Natural killer cell (primary cell): ENCODE measurements at regions of chr19 and their contacts with region 1.

Region 1: GRCh38 chr19:35931161-35931873 is 4.9 kb upstream of the LRFN3 start:
- DNase-seq: peak; percentile 97 to 100
- ATAC-seq: peak; percentile 89 to 98 (median 91)
- H3K4me3 ChIP-seq: peak overlapping the region; percentile 26
- H3K4me3 Mint-ChIP-seq: peak overlapping the region; percentile 83
- H3K27ac ChIP-seq: peak overlapping the region; percentile 86
- H3K27ac Mint-ChIP-seq: peak overlapping the region; percentile 79 to 91
- H3K4me1 ChIP-seq: peaks cover 56% of the 10 kb centered on the region
- H3K4me1 Mint-ChIP-seq: peaks cover 24 to 54% of the 10 kb centered on the region in 2 donors
- H3K27me3 ChIP-seq: peaks cover 6% of the 10 kb centered on the region
- H3K27me3 Mint-ChIP-seq: peaks cover 0 to 4% of the 10 kb centered on the region in 2 donors
- CTCF ChIP-seq: peak; percentile 83

Region 2: DNA sequence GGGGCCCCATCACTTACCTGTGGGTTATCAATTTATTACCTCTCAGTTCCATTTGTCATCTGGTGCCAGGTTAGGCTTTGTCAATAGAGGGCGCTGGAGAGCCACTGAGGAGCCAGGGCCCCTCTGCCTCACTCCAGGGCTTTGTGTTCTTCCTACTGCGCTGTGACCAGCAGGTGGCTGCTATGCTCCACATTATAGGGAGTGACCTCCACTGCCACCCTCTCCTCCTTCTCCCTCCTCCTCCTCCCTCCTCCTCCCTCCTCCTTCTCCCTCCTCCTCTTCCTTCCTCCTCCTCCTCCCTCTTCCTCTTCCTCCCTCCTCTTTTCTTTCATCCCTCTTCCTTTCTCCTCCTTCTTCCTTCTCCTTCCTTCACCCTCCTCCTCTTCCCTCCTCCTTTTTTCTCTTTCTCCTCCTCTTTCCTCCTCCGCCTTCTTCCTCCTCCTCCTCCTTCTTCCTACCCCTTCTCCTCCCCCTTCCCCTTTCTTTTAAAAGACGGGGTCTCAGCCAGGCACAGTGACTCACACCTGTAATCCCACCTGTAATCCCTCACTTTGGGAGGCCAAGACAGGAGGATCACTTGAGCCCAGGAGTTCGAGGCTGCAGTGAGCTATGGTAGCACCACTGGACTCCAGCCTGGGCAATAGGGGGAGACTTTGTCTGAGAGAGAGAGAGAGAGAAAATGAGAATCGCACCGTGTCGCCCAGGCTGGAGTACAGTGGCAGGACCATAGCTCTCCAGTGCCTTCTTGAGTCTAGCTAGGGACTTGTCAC is 237.3 kb before region 1 on chr19:
- intact Hi-C with region 1: loop called (anchors 1 kb)
- DNase-seq: peak; percentile 78 to 96
- ATAC-seq: peak; percentile 100
- H3K4me3 ChIP-seq: no peak overlapping the region
- H3K4me3 Mint-ChIP-seq: no peak overlapping the region
- H3K27ac ChIP-seq: no peak overlapping the region
- H3K27ac Mint-ChIP-seq: no peak overlapping the region
- H3K4me1 ChIP-seq: no peaks in the 10 kb centered on the region
- H3K4me1 Mint-ChIP-seq: no peaks in the 10 kb centered on the region
- H3K27me3 ChIP-seq: no peaks in the 10 kb centered on the region
- H3K27me3 Mint-ChIP-seq: no peaks in the 10 kb centered on the region
- CTCF ChIP-seq: peak; percentile 97

Region 3: DNA sequence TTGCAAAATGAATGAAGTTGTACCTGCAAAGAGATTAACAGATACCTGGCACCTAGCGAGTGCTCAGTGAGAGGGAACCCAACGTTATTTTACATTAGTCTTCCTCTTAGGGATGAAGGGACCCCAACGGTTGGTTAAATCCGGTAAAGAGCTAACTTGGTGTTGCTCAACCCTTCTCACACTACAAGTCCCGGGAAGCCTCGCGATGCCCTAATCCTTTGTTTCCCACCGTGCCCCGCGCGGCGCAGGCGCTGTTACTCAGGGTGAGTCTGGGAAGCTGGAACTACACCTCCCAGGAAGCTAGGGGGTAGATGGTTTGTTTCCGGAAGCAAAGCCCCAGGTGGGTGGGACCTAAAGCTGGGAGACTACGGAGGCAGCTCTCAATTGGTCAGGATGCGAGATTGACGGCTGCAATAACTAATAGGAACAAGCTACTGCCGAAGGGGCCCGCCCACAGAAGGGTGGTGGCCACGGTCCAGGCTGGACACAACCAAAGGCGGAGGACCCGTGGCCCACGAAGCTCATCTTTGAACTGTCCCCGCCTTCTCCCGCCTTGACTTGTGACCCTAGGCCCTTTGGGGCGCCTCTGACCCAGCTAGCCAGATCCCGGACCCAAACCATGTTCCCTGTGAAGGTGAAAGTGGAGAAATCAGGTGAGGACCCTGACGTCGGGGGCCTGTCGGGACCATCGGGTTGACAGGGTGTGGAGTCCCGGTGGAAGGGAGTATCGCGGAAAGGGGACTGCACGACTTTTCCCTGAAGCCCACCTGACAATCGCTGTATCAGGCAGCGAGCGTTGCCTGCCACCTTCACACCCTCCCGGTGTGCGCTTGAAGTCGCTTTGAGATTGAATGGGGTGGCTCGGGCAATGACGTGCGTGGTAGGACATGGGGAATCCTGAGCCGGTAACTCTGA is 183.0 kb before region 1 on chr19 and contains the start of gene LIN37:
- intact Hi-C with region 1: loop called (anchors 1 kb)
- DNase-seq: peak; percentile 97 to 99
- ATAC-seq: peak; percentile 73 to 90 (median 77)
- H3K4me3 ChIP-seq: peak within 1 kb of the TSS; percentile 91
- H3K4me3 Mint-ChIP-seq: peak within 1 kb of the TSS; percentile 97
- H3K27ac ChIP-seq: peak within 1 kb of the TSS; percentile 84
- H3K27ac Mint-ChIP-seq: peak within 1 kb of the TSS; percentile 92
- H3K4me1 ChIP-seq: peaks cover 46% of the 10 kb centered on the region
- H3K4me1 Mint-ChIP-seq: peaks cover 33 to 47% of the 10 kb centered on the region in 2 donors
- H3K27me3 ChIP-seq: no peaks in the 10 kb centered on the region
- H3K27me3 Mint-ChIP-seq: no peaks in the 10 kb centered on the region
- CTCF ChIP-seq: no peak
- total RNA-seq, gene LIN37: 16.7 to 22.1 (median 18.2) TPM

Region 4: DNA sequence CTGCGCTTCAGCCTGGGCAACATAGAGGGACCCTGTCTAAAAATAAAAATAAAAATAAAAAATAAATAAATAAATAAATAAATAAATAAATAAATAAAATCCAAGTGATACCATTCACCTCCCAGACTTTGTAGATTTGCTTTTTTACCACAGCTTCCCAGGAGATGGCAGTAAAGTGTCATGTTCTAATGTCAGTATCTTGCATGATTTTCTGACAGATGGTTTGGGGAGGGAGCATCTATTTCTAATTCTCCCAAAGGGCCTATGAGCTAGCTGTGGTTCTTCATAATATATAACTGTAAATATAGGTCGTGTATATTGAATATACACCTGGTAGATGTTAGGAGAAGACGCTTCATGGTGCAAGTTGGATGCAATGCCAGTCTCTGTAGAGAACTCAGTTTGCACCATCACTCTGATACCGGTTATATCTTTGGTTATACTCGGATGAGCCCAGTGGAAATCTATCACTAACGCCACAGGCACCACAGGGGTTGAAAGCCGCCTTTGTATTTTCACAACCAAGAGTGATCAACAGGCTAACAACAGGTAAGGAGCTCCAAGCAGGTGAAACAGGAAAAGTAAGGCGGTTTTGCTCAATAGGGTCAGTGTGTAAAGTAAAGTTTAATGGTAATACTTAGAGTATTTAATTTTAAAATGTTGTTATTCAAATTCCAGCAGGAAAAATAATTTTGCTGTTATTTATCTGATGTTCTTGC is 49.0 kb before region 1 on chr19:
- intact Hi-C with region 1: loop called (anchors 1 kb)
- DNase-seq: peak in 1 of 2 donors; percentile 84
- ATAC-seq: peak; percentile 53 to 88 (median 71)
- H3K4me3 ChIP-seq: no peak overlapping the region
- H3K4me3 Mint-ChIP-seq: peak overlapping the region; percentile 9
- H3K27ac ChIP-seq: no peak overlapping the region
- H3K27ac Mint-ChIP-seq: peak overlapping the region in 1 of 2 donors; percentile 67
- H3K4me1 ChIP-seq: peaks cover 3% of the 10 kb centered on the region
- H3K4me1 Mint-ChIP-seq: peaks cover 12% of the 10 kb centered on the region in 2 donors
- H3K27me3 ChIP-seq: peaks cover 14% of the 10 kb centered on the region
- H3K27me3 Mint-ChIP-seq: peaks cover 21 to 22% of the 10 kb centered on the region in 2 donors
- CTCF ChIP-seq: peak; percentile 68

Region 5: GRCh38 chr19:35899547-35900214 is 31.6 kb before region 1 on chr19:
- intact Hi-C with region 1: loop called (anchors 1 kb)
- DNase-seq: peak; percentile 84 to 97
- ATAC-seq: peak; percentile 50 to 75 (median 59)
- H3K4me3 ChIP-seq: peak overlapping the region; percentile 74
- H3K4me3 Mint-ChIP-seq: peak overlapping the region; percentile 92
- H3K27ac ChIP-seq: peak overlapping the region; percentile 97
- H3K27ac Mint-ChIP-seq: peak overlapping the region; percentile 90 to 97
- H3K4me1 ChIP-seq: peaks cover 74% of the 10 kb centered on the region
- H3K4me1 Mint-ChIP-seq: peaks cover 43 to 74% of the 10 kb centered on the region in 2 donors
- H3K27me3 ChIP-seq: no peaks in the 10 kb centered on the region
- H3K27me3 Mint-ChIP-seq: no peaks in the 10 kb centered on the region
- CTCF ChIP-seq: no peak

Region 6: DNA sequence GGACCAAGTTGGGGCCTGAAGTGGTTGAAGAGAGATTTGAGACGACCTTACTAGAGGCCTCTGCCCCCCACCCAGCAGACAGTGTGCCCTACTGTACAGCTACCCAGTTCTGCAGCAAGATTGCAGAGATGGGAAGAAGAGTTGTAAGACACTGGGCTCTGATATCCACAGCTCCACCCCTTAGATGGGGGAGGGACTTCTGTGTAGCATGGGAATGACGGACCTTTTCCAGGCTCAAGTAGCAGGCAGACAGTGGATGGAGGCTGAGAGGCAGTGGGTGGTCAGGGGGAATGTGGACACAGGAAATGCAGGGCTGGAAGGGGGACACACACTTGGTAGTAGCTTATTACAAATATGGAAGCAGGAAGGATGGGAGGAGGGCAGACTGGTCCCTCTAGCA is 17.8 kb after region 1 on chr19:
- intact Hi-C with region 1: loop called (anchors 2 kb)
- DNase-seq: no peak
- ATAC-seq: no peak
- H3K4me3 ChIP-seq: no peak overlapping the region
- H3K4me3 Mint-ChIP-seq: no peak overlapping the region
- H3K27ac ChIP-seq: no peak overlapping the region
- H3K27ac Mint-ChIP-seq: peak overlapping the region in 1 of 2 donors; percentile 68
- H3K4me1 ChIP-seq: peaks cover 30% of the 10 kb centered on the region
- H3K4me1 Mint-ChIP-seq: peaks cover 20 to 40% of the 10 kb centered on the region in 2 donors
- H3K27me3 ChIP-seq: no peaks in the 10 kb centered on the region
- H3K27me3 Mint-ChIP-seq: no peaks in the 10 kb centered on the region
- CTCF ChIP-seq: no peak

Region 7: DNA sequence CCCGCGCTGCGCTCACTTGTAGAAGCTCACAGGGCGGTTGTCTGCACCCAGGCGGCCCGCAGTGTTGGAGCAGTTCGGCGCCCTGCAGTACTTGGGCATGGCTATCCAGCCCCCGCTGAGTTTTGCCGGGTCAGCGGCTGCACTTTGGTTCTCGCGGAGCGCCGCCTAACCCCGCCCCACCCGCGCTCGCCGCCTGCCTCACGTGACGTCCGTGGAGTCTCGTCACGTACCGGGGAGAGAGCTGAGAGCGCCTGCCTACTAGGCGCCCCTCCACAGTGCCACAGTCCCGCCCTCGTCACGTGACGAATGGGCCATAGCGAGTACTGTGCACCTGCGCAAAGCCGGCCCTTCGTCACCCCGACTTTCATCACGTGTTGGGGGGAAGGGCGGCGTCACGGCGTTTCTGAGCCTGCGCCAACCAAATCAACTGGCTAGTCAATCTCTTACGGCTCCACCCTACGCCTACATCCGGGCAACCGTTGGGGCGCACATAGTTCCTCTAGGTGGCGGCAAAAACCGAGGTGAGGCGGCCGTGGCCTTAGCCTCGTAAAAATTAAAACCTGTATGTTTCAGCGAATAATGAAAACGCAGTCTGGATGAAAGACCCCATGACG is 122.9 kb after region 1 on chr19 and contains the start of gene THAP8:
- intact Hi-C with region 1: loop called (anchors 1 kb)
- DNase-seq: peak; percentile 99 to 100
- ATAC-seq: peak; percentile 83 to 94 (median 84)
- H3K4me3 ChIP-seq: peak within 1 kb of the TSS; percentile 85
- H3K4me3 Mint-ChIP-seq: peak within 1 kb of the TSS; percentile 98
- H3K27ac ChIP-seq: peak within 1 kb of the TSS; percentile 90
- H3K27ac Mint-ChIP-seq: peak within 1 kb of the TSS; percentile 93 to 94
- H3K4me1 ChIP-seq: peaks cover 18% of the 10 kb centered on the region
- H3K4me1 Mint-ChIP-seq: peaks cover 26 to 29% of the 10 kb centered on the region in 2 donors
- H3K27me3 ChIP-seq: no peaks in the 10 kb centered on the region
- H3K27me3 Mint-ChIP-seq: no peaks in the 10 kb centered on the region
- CTCF ChIP-seq: peak; percentile 66
- total RNA-seq, gene THAP8: 1.8 to 3.2 (median 2.8) TPM

Region 8: GRCh38 chr19:36152352-36153091 is 221.2 kb after region 1 on chr19 and contains the start of gene COX7A1:
- intact Hi-C with region 1: no loop called
- DNase-seq: no peak
- ATAC-seq: peak in 1 of 3 donors; percentile 28
- H3K4me3 ChIP-seq: no peak within 1 kb of the TSS
- H3K4me3 Mint-ChIP-seq: peak within 1 kb of the TSS; percentile 17
- H3K27ac ChIP-seq: no peak within 1 kb of the TSS
- H3K27ac Mint-ChIP-seq: peak within 1 kb of the TSS; percentile 40 to 66
- H3K4me1 ChIP-seq: peaks cover 5% of the 10 kb centered on the region
- H3K4me1 Mint-ChIP-seq: peaks cover 0 to 27% of the 10 kb centered on the region in 2 donors
- H3K27me3 ChIP-seq: no peaks in the 10 kb centered on the region
- H3K27me3 Mint-ChIP-seq: no peaks in the 10 kb centered on the region
- CTCF ChIP-seq: no peak
- total RNA-seq, gene COX7A1: not detected